ENCODE measurements at regions of chr18 and their contacts with region 1.

Region 1: DNA sequence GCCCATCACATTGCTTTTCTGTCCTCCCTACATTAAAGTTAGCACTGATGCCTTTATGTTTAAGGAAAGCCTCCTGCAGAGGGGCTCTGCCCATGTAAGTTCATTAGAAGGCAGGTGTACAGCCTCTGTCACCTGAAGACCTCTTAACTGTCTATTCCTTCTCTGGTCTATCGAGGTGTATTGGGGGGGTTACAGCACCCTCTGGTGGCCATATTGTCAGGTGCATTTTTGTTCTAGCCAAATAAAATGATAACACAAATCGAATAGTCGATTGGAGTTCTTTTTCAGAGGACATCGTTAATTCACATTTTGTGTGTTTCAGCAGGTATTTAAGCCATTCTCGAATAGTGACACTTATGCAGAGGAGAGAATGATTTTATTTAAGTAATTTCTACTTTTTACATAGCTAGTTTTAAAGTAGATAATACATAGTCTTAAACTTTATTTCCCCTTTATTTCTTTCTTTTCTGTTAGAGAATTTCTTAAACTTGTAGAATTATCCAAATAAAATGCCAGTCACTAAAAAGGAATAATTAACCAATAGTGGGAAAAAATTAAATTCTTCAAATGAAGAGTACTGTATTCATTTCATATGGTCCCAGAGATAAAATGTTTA is 136.8 kb downstream of the NEDD4L start:
- DNase-seq: peak; percentile 60
- H3K4me3 Mint-ChIP-seq: no peak overlapping the region
- H3K27ac Mint-ChIP-seq: no peak overlapping the region
- H3K4me1 Mint-ChIP-seq: no peaks in the 10 kb centered on the region
- H3K27me3 Mint-ChIP-seq: peaks cover 8% of the 10 kb centered on the region

Region 2: GRCh38 chr18:58190842-58191530 is 10.1 kb after region 1 on chr18:
- CTCF ChIA-PET with region 1: interaction called, 14 read pairs
- POLR2A ChIA-PET with region 1: no interaction called
- DNase-seq: no peak
- H3K4me3 Mint-ChIP-seq: no peak overlapping the region
- H3K27ac Mint-ChIP-seq: no peak overlapping the region
- H3K4me1 Mint-ChIP-seq: peaks cover 9% of the 10 kb centered on the region
- H3K27me3 Mint-ChIP-seq: peaks cover 14% of the 10 kb centered on the region

Region 3: GRCh38 chr18:58205443-58206160 is 24.8 kb after region 1 on chr18:
- CTCF ChIA-PET with region 1: no interaction called
- POLR2A ChIA-PET with region 1: no interaction called
- DNase-seq: no peak
- H3K4me3 Mint-ChIP-seq: no peak overlapping the region
- H3K27ac Mint-ChIP-seq: no peak overlapping the region
- H3K4me1 Mint-ChIP-seq: peaks cover 3% of the 10 kb centered on the region
- H3K27me3 Mint-ChIP-seq: no peaks in the 10 kb centered on the region

Region 4: GRCh38 chr18:58223717-58224424 is 43.0 kb after region 1 on chr18:
- CTCF ChIA-PET with region 1: no interaction called
- POLR2A ChIA-PET with region 1: no interaction called
- DNase-seq: no peak
- H3K4me3 Mint-ChIP-seq: no peak overlapping the region
- H3K27ac Mint-ChIP-seq: no peak overlapping the region
- H3K4me1 Mint-ChIP-seq: no peaks in the 10 kb centered on the region
- H3K27me3 Mint-ChIP-seq: peaks cover 11% of the 10 kb centered on the region

Region 5: GRCh38 chr18:58310517-58310916 is 129.7 kb after region 1 on chr18:
- CTCF ChIA-PET with region 1: no interaction called
- POLR2A ChIA-PET with region 1: no interaction called
- DNase-seq: no peak
- H3K4me3 Mint-ChIP-seq: no peak overlapping the region
- H3K27ac Mint-ChIP-seq: no peak overlapping the region
- H3K4me1 Mint-ChIP-seq: peaks cover 27% of the 10 kb centered on the region
- H3K27me3 Mint-ChIP-seq: peaks cover 12% of the 10 kb centered on the region

Region 6: DNA sequence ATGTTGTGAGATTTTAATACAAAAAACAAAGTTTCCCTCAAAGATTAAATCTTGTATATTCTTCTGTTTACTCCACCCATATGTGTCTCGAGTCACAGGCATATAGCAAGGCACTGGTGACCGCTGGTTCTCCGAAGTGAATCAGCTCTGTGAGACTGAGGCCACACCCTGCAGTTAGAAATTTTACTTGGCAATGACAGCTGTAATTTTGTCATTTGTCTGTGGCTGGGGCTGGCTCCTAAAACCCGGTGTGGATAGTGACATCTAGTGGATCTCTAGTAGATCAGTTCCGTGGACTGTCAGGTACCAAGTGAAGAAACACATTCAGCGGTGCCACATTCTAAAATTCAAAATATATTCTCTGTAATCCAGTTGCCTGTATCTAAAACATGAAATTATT is 141.1 kb after region 1 on chr18:
- CTCF ChIA-PET with region 1: interaction called, 14 read pairs
- POLR2A ChIA-PET with region 1: no interaction called
- DNase-seq: peak; percentile 69
- H3K4me3 Mint-ChIP-seq: peak overlapping the region; percentile 19
- H3K27ac Mint-ChIP-seq: peak overlapping the region; percentile 68
- H3K4me1 Mint-ChIP-seq: peaks cover 22% of the 10 kb centered on the region
- H3K27me3 Mint-ChIP-seq: peaks cover 6% of the 10 kb centered on the region